ENCODE measurements at regions of chr22 and their contacts with region 1.

Region 1: GRCh38 chr22:37244114-37244921 is at the start of gene RAC2:
- DNase-seq: peak; percentile 97
- ATAC-seq: peak; percentile 60
- H3K4me3 Mint-ChIP-seq: peak within 1 kb of the TSS; percentile 92
- H3K27ac Mint-ChIP-seq: peak within 1 kb of the TSS; percentile 94
- H3K4me1 Mint-ChIP-seq: peaks cover 47% of the 10 kb centered on the region
- H3K27me3 Mint-ChIP-seq: no peaks in the 10 kb centered on the region
- total RNA-seq, gene RAC2: 692 to 930 TPM

Region 2: GRCh38 chr22:36365020-36365411 is 879.3 kb before region 1 on chr22:
- CTCF ChIA-PET with region 1: no interaction called
- POLR2A ChIA-PET with region 1: no interaction called
- intact Hi-C with region 1: loop called in 1 of 2 experiments (anchors 10 kb)
- DNase-seq: peak; percentile 96
- ATAC-seq: peak; percentile 89
- H3K4me3 Mint-ChIP-seq: peak overlapping the region; percentile 67
- H3K27ac Mint-ChIP-seq: peak overlapping the region; percentile 96
- H3K4me1 Mint-ChIP-seq: peaks cover 99% of the 10 kb centered on the region
- H3K27me3 Mint-ChIP-seq: no peaks in the 10 kb centered on the region

Region 3: DNA sequence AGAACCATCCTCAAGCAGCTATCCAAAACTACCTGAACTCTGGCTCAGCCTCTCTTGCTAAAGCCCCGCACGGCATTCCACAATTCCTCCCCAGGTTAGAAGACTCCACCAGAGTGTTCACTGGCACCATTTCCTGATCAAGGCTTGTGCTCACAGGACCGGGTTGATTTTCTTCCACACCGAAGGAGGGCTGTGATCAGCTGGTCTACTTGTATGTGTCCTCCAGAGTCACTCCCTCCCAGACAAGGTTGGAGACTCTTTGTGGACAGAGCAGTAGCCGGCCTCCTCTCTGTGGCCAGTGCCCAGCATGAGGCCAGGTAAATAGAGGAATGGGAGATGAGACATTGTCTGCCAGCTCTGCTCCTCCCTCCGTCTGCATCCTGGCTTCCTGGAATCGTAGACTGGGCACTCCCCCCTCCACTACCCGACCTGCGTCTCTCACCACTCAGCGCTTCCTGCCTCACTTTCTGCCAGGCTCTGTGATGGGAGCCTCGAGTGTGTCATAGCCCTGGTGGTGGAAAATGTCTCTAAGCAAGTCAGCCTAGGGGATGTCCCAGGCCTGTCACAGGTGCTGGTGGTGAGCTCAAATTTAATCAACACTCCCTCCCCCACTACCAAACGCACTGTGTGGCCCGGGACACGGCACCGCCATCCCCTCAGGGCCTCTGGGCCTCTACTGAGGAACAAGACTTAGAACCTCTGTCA is 122.3 kb before region 1 on chr22:
- CTCF ChIA-PET with region 1: interaction called, 8 read pairs
- POLR2A ChIA-PET with region 1: interaction called, 4 read pairs
- intact Hi-C with region 1: loop called in 1 of 2 experiments (anchors 1 kb)
- DNase-seq: peak; percentile 96
- ATAC-seq: peak; percentile 94
- H3K4me3 Mint-ChIP-seq: peak overlapping the region; percentile 79
- H3K27ac Mint-ChIP-seq: peak overlapping the region; percentile 98
- H3K4me1 Mint-ChIP-seq: peaks cover 76% of the 10 kb centered on the region
- H3K27me3 Mint-ChIP-seq: no peaks in the 10 kb centered on the region

Region 4: GRCh38 chr22:37218771-37219411 is 25.4 kb before region 1 on chr22:
- CTCF ChIA-PET with region 1: interaction called, 29 read pairs
- POLR2A ChIA-PET with region 1: interaction called, 13 read pairs
- intact Hi-C with region 1: loop called (anchors 1 to 2 kb)
- DNase-seq: peak; percentile 83
- ATAC-seq: peak; percentile 68
- H3K4me3 Mint-ChIP-seq: peak overlapping the region; percentile 78
- H3K27ac Mint-ChIP-seq: peak overlapping the region; percentile 94
- H3K4me1 Mint-ChIP-seq: peaks cover 79% of the 10 kb centered on the region
- H3K27me3 Mint-ChIP-seq: no peaks in the 10 kb centered on the region

Region 5: DNA sequence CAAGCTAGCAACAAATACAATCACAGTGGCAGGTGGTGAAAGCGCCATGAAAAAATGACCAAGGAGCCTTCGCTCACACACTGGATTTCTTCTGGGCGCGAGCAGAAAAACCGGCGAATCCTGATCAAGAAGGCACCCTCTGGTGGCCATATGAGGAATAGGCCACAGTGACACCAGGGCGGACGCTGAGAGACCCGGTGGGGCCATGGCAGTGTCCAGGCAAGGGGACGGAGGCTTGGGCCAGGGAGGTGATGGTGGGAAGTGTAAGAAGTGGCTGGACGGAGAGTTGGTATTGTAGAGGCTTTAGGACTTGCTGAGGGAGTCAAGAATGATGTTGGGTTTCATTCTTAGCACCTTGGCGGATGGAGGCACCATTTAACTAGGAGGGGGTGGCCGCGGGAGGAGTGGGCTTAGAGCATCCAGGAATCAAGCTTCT is 16.6 kb after region 1 on chr22:
- CTCF ChIA-PET with region 1: interaction called, 187 read pairs
- POLR2A ChIA-PET with region 1: interaction called, 3 read pairs
- intact Hi-C with region 1: loop called in 1 of 2 experiments (anchors 1 kb)
- DNase-seq: peak; percentile 80
- ATAC-seq: peak; percentile 75
- H3K4me3 Mint-ChIP-seq: no peak overlapping the region
- H3K27ac Mint-ChIP-seq: peak overlapping the region; percentile 15
- H3K4me1 Mint-ChIP-seq: peaks cover 29% of the 10 kb centered on the region
- H3K27me3 Mint-ChIP-seq: no peaks in the 10 kb centered on the region

Region 6: GRCh38 chr22:37401401-37402183 is 157.3 kb after region 1 on chr22:
- CTCF ChIA-PET with region 1: no interaction called
- POLR2A ChIA-PET with region 1: no interaction called
- intact Hi-C with region 1: no loop called
- DNase-seq: no peak
- ATAC-seq: no peak
- H3K4me3 Mint-ChIP-seq: no peak overlapping the region
- H3K27ac Mint-ChIP-seq: no peak overlapping the region
- H3K4me1 Mint-ChIP-seq: no peaks in the 10 kb centered on the region
- H3K27me3 Mint-ChIP-seq: peaks cover 2% of the 10 kb centered on the region